Caco-2 (cell line): ENCODE measurements at regions of chr12 and their contacts with region 1.

Region 1: DNA sequence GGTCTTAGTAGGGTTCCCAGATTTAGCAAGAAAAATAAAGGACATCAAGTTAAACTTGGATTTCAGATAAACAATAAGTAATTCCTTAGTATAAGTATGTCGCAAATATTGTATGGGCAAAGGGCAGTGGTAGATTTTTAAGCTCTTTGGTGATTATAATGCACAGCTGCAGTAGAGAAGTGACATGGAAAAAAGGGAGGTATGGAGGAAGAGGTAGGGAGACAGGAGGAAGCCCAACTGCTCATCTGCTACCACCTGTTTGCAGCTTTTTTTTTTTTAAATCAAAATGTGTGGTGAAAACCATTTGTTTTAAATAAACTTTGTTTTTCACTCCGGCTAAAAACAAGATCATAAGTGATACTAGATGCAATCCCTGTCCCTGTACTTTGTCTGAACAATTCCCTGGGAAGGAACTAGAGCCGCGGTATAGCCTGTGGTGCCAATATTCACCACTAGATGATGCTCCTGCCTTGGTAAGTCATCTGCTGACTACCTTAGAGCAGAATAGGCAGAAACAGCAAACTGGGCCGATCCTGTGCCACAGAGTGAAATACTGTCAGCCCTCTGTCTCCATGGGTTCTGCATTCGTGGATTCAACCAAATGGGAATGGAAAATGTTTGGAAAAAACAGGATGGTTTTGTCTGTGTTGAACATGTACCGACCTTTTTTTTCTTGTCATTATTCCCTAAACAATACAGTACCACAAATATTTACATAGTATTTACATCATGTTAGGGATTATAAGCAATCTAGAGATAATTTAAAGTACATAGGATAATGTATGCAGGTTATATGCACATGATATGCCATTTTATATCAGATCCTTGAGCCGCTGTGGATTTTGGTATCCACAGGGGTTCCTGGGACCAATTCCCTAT is 62.4 kb upstream of the PLBD1 start:
- DNase-seq: peak; percentile 82 to 89
- H3K4me3 ChIP-seq: no peak overlapping the region
- H3K4me3 Mint-ChIP-seq: no peak overlapping the region
- H3K27ac Mint-ChIP-seq: no peak overlapping the region
- H3K4me1 ChIP-seq: peaks cover 18% of the 10 kb centered on the region
- H3K4me1 Mint-ChIP-seq: peaks cover 27% of the 10 kb centered on the region
- H3K27me3 ChIP-seq: no peaks in the 10 kb centered on the region
- H3K27me3 Mint-ChIP-seq: no peaks in the 10 kb centered on the region
- CTCF ChIP-seq: peak; percentile 98 to 99

Region 2: GRCh38 chr12:14239350-14239934 is 390.6 kb before region 1 on chr12:
- CTCF ChIA-PET with region 1: no interaction called
- POLR2A ChIA-PET with region 1: no interaction called
- intact Hi-C with region 1: loop called (anchors 2 kb)
- DNase-seq: peak; percentile 64 to 85
- H3K4me3 ChIP-seq: no peak overlapping the region
- H3K4me3 Mint-ChIP-seq: peak overlapping the region; percentile 32
- H3K27ac Mint-ChIP-seq: peak overlapping the region; percentile 43
- H3K4me1 ChIP-seq: peaks cover 18% of the 10 kb centered on the region
- H3K4me1 Mint-ChIP-seq: peaks cover 9% of the 10 kb centered on the region
- H3K27me3 ChIP-seq: no peaks in the 10 kb centered on the region
- H3K27me3 Mint-ChIP-seq: no peaks in the 10 kb centered on the region
- CTCF ChIP-seq: peak in 1 of 2 experiments; percentile 16

Region 3: DNA sequence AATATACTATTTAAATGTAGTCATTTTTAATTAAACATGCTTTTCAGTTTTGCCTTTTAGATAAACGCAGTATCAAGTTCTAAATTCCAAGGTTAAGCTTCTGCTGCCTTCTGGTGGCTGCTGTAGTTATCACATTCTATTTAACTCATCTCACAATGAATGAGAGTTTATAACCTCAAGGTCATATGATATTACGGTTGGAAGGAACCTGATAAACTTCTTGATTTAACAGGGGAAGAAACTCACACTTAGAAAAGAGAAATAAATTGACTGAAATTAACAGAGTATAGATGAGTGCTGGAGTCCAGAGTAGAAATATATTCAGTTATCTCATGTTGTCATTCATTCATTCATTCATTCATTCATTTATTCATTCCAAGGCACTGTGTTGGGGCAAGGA is 34.4 kb after region 1 on chr12:
- CTCF ChIA-PET with region 1: no interaction called
- POLR2A ChIA-PET with region 1: interaction called, 5 read pairs
- intact Hi-C with region 1: loop called (anchors 1 kb)
- DNase-seq: peak in 1 of 2 experiments; percentile 51
- H3K4me3 ChIP-seq: no peak overlapping the region
- H3K4me3 Mint-ChIP-seq: no peak overlapping the region
- H3K27ac Mint-ChIP-seq: no peak overlapping the region
- H3K4me1 ChIP-seq: no peaks in the 10 kb centered on the region
- H3K4me1 Mint-ChIP-seq: peaks cover 10% of the 10 kb centered on the region
- H3K27me3 ChIP-seq: no peaks in the 10 kb centered on the region
- H3K27me3 Mint-ChIP-seq: no peaks in the 10 kb centered on the region
- CTCF ChIP-seq: peak; percentile 64 to 89

Region 4: DNA sequence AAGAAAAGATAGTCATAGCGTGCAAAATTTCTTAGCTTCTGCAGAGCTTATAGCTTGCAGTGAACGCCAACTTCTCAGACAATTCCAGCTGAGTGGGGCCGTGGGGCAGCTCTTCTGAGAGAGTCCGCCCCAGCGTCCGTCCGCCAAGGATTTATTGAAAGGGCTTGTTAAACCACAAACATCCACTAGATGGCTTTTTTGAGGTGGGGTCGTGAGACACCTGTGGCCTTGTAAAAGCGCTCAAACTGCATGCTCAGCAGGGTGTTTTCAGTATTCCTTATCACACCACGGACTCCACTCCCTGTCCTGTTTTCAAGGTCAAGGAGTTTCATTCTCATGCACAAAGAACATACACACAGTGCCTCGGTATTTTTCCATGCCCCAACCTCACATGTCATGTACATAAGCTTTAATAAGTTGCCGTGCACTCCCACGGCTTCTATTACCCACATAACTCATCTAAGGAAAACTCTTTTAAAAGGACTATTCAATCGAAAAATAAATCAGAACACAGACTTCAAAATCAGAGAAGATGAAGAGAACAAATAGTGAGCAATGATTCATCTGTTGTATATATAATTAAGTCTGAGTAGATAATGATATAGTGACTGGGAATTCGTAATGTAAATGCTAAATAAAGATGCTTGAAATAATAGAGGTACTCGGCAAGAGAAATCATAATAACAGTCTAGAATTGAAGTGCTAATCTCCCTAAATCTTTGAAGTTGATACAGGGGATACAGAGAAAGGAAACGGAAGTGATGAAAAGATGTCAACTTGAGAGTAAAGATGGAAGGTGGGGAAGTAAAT is 126.5 kb after region 1 on chr12:
- CTCF ChIA-PET with region 1: no interaction called
- POLR2A ChIA-PET with region 1: no interaction called
- intact Hi-C with region 1: no loop called
- DNase-seq: peak; percentile 51 to 72
- H3K4me3 ChIP-seq: no peak overlapping the region
- H3K4me3 Mint-ChIP-seq: no peak overlapping the region
- H3K27ac Mint-ChIP-seq: no peak overlapping the region
- H3K4me1 ChIP-seq: 0 out of 2 replicates have a peak, but pooled peaks cover 3% of the 10 kb centered on the region
- H3K4me1 Mint-ChIP-seq: no peaks in the 10 kb centered on the region
- H3K27me3 ChIP-seq: no peaks in the 10 kb centered on the region
- H3K27me3 Mint-ChIP-seq: no peaks in the 10 kb centered on the region
- CTCF ChIP-seq: peak; percentile 53 to 69

Region 5: GRCh38 chr12:14769969-14770495 is 140.0 kb after region 1 on chr12:
- CTCF ChIA-PET with region 1: interaction called, 3 read pairs
- POLR2A ChIA-PET with region 1: no interaction called
- intact Hi-C with region 1: loop called (anchors 1 kb)
- DNase-seq: peak; percentile 91 to 95
- H3K4me3 ChIP-seq: peak overlapping the region; percentile 96
- H3K4me3 Mint-ChIP-seq: peak overlapping the region; percentile 90
- H3K27ac Mint-ChIP-seq: peak overlapping the region; percentile 96
- H3K4me1 ChIP-seq: peaks cover 13% of the 10 kb centered on the region; the same call in 1 of the 2 replicates
- H3K4me1 Mint-ChIP-seq: peaks cover 20% of the 10 kb centered on the region
- H3K27me3 ChIP-seq: no peaks in the 10 kb centered on the region
- H3K27me3 Mint-ChIP-seq: no peaks in the 10 kb centered on the region
- CTCF ChIP-seq: peak; percentile 93 to 98

Region 6: DNA sequence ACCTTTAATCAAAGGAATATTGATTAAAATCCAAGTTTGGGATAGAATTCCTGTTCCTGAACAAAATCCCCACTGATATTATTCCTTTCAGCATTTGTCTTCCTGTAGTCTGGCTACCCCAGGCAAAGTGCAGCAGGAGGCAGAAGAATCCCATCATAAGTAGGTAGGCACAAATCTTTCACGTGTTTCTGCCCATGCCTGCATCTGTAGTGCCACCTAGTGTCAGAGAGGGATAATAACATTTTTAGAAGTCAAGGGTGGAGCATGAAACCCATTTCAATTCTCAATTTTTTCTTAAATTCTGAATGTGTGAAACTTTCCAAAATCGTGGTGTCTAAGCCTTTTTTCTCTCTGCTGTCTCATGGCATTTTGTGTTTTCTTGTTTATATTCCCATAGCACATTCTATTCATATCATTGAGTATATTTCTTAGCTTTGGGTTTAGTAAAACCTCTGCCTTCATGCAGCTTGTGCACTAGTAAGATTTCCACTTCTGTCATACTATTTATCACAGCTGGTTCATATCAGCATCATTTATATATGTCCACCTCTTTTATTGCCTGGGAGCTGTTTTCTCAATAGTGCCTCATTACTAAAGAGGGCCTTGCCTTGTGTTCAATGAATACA is 639.0 kb after region 1 on chr12:
- CTCF ChIA-PET with region 1: no interaction called
- POLR2A ChIA-PET with region 1: no interaction called
- intact Hi-C with region 1: loop called (anchors 1 kb)
- DNase-seq: peak; percentile 71 to 72
- H3K4me3 ChIP-seq: no peak overlapping the region
- H3K4me3 Mint-ChIP-seq: no peak overlapping the region
- H3K27ac Mint-ChIP-seq: no peak overlapping the region
- H3K4me1 ChIP-seq: no peaks in the 10 kb centered on the region
- H3K4me1 Mint-ChIP-seq: no peaks in the 10 kb centered on the region
- H3K27me3 ChIP-seq: no peaks in the 10 kb centered on the region
- H3K27me3 Mint-ChIP-seq: no peaks in the 10 kb centered on the region
- CTCF ChIP-seq: peak; percentile 87 to 96